ENCODE measurements at regions of chr19 and their contacts with region 1.

Region 1: GRCh38 chr19:18281082-18282020 is at the start of gene JUND:
- DNase-seq: peak; percentile 98
- H3K4me3 ChIP-seq: peak within 1 kb of the TSS; percentile 92 to 99 (median 96)
- H3K27ac ChIP-seq: peak within 1 kb of the TSS; percentile 95
- H3K4me1 ChIP-seq: peaks cover 23% of the 10 kb centered on the region
- H3K27me3 ChIP-seq: no peaks in the 10 kb centered on the region
- CTCF ChIP-seq: no peak
- total RNA-seq, gene JUND: 59.6 to 74.0 TPM

Region 2: DNA sequence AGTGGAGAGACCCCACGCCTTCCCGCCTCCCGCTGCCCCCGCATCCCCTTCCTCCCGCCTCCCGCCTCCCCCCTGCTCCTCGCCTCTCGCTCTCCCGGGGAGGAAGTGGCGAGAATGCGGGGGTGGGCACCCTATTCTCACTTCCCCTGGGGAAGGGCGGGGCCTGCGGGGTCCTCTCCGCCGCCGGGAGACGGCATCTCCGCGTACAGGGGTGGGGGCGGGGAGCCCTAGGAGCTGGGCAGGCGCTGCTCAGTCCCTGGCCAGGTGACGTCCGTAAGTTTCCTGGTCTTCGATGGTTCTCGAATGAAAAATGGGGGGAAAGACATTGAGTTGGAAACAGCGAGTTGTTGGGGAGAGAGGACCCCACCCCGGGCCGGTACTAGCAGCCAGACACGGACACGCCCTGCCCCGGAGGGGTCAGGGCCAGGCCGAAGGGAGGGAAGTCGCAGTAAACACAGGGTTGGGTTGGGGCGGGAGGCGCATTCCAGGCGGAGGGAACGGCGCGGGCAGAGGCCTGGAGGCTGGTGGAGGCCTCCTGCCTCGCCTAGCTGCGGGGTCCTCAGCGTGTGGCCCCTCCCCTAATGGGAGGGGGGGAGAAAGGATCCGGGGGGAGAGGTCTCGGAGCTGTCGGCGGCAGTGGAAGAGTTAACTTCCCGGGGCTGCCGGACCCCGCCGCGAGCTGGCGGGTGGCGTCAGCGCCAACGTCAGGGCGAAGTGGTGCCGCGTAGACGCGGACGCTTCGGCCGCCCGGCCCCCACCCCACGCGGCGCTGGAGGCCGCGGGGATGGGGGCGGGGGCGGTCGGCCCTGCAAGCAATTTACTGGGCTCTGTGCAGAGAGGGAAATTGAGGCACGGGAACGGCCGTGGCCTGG is 10.5 kb after region 1 on chr19:
- CTCF ChIA-PET with region 1: no interaction called
- dilution Hi-C with region 1: no loop called
- in situ Hi-C with region 1: no loop called
- intact Hi-C with region 1: loop called (anchors 1 kb)
- DNase-seq: peak; percentile 41
- H3K4me3 ChIP-seq: peak overlapping the region; percentile 38 to 53 (median 45)
- H3K27ac ChIP-seq: peak overlapping the region; percentile 25
- H3K4me1 ChIP-seq: peaks cover 18% of the 10 kb centered on the region
- H3K27me3 ChIP-seq: no peaks in the 10 kb centered on the region
- CTCF ChIP-seq: no peak

Region 3: GRCh38 chr19:18322759-18323460 is 41.6 kb after region 1 on chr19 and contains the start of gene LSM4:
- CTCF ChIA-PET with region 1: interaction called, 23 read pairs
- dilution Hi-C with region 1: no loop called
- in situ Hi-C with region 1: loop called (anchors 5 to 10 kb)
- intact Hi-C with region 1: loop called (anchors 1 kb)
- DNase-seq: peak; percentile 98
- H3K4me3 ChIP-seq: peak within 1 kb of the TSS; percentile 73 to 95 (median 82)
- H3K27ac ChIP-seq: peak within 1 kb of the TSS; percentile 82
- H3K4me1 ChIP-seq: peaks cover 16% of the 10 kb centered on the region
- H3K27me3 ChIP-seq: no peaks in the 10 kb centered on the region
- CTCF ChIP-seq: peak; percentile 15 to 61
- total RNA-seq, gene LSM4: 127 to 182 TPM

Region 4: DNA sequence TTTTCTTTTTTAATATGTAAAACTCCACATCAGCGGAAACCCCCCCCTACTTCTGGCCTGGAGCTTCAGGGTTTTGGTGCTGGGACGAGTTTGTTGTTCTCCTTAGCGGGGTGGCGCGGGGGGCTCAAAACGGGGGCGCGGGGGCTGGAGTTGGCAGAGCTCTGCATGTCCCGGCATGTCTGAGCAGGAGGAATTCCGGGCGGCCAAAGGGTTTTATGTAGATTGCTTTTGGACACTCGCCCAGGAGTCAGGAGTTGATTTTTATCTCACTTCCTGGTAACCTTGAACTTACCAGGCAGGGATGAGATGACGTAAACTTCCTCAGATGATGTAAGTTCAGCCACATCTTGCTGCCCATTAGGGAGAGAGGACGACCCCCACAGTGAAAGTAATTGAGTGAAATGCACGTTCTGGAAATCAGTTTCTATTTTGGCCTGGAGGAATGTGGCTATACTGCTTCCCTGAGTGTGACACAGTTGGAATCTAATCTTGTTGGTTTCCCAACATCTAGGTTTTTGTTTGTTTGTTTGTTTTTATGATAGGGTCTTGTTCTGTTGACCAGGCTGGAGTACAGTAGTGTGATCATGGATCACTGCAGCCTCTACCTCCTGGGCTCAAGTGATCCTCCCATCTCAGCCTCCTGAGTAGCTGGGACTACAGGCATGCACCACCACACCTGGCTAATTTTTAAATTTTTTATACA is 83.6 kb after region 1 on chr19:
- CTCF ChIA-PET with region 1: interaction called, 10 read pairs
- dilution Hi-C with region 1: no loop called
- in situ Hi-C with region 1: no loop called
- intact Hi-C with region 1: no loop called
- DNase-seq: peak; percentile 96
- H3K4me3 ChIP-seq: no peak overlapping the region
- H3K27ac ChIP-seq: peak overlapping the region; percentile 80
- H3K4me1 ChIP-seq: peaks cover 19% of the 10 kb centered on the region
- H3K27me3 ChIP-seq: no peaks in the 10 kb centered on the region
- CTCF ChIP-seq: no peak

Region 5: DNA sequence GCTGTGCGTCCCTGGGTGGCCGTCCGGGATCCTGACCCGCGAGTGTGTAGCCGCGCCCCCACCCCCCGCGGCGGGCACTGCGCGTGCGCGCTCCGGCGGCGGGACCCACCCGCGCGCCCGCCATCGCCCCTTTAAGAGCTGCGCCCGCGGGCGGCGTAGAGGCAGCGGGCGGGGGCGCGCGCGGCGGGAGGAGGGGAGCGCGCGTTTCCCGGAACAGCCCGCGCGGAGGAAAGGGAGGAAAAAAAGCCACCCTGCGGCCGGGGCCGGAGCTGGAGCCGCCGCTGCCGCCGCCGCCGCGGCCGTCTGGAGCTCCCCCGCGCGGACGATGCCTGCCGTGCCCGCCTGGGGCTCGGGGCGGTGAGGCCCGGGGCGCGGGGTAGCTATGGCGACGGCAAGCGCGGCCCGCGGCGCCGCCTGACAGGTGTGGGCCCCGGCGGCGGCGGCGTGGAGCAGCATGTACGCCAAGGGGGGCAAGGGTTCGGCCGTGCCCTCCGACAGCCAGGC is 137.9 kb after region 1 on chr19 and contains the start of gene SSBP4:
- CTCF ChIA-PET with region 1: no interaction called
- dilution Hi-C with region 1: no loop called
- in situ Hi-C with region 1: loop called in 1 of 2 experiments (anchors 10 kb)
- intact Hi-C with region 1: no loop called
- DNase-seq: peak; percentile 68
- H3K4me3 ChIP-seq: peak within 1 kb of the TSS; percentile 59 to 69 (median 60)
- H3K27ac ChIP-seq: no peak within 1 kb of the TSS
- H3K4me1 ChIP-seq: peaks cover 27% of the 10 kb centered on the region
- H3K27me3 ChIP-seq: no peaks in the 10 kb centered on the region
- CTCF ChIP-seq: peak in 1 of 2 donors; percentile 31
- total RNA-seq, gene SSBP4: 34.0 to 41.0 TPM

Region 6: DNA sequence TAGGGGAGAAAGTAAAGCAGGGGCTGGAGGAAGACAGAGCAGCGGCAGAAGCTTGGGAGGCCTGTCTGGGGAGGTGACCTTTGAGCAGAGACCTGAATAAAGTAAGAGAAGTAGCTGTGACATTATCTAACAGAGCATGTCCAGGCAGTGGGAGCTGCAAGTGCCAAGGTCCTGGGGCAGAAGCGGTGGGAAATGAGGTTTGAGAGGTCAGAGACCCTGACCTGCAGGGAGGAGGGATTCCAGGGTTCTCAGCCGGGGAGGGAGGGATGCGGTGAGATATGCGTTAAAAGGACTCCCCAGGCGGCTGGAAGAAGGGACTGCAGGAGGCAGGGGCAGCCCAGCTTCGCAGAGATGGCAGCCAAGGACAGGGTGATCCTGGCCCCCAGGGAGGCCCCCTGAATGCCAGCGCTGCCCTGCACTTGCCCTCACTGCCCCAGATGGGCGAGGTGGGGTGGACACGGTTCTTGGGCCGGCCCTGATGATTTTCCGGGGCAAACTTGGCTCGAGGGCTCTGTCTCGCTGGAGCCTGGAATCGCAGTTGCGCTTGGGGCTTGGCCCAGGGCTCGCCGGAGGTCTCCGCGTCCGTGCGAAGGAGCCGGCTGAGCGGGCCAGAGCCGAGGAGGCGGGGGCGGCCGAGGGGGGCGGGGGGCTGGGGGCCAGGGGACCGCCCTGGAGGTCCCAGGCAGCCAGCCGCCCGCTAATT is 322.1 kb after region 1 on chr19:
- CTCF ChIA-PET with region 1: no interaction called
- dilution Hi-C with region 1: no loop called
- in situ Hi-C with region 1: no loop called
- intact Hi-C with region 1: no loop called
- DNase-seq: no peak
- H3K4me3 ChIP-seq: no peak overlapping the region
- H3K27ac ChIP-seq: no peak overlapping the region
- H3K4me1 ChIP-seq: peaks cover 9% of the 10 kb centered on the region
- H3K27me3 ChIP-seq: peaks cover 24% of the 10 kb centered on the region
- CTCF ChIP-seq: no peak